Activated naive CD8-positive, alpha-beta T cell treated with anti-CD3 and anti-CD28 coated beads, Interleukin-2, amount 10 ng/mL, durations not matched to agents 7 days and 5 days (primary cell): ENCODE measurements at regions of chr6 and their contacts with region 1.

Region 1: GRCh38 chr6:33299237-33299944 is 649 bp upstream of the RGL2 start:
- DNase-seq: peak; percentile 94
- ATAC-seq: peak; percentile 85
- H3K4me3 Mint-ChIP-seq: peak overlapping the region; percentile 99
- H3K27ac Mint-ChIP-seq: peak overlapping the region; percentile 99
- H3K4me1 Mint-ChIP-seq: peaks cover 20% of the 10 kb centered on the region
- H3K27me3 Mint-ChIP-seq: no peaks in the 10 kb centered on the region

Region 2: DNA sequence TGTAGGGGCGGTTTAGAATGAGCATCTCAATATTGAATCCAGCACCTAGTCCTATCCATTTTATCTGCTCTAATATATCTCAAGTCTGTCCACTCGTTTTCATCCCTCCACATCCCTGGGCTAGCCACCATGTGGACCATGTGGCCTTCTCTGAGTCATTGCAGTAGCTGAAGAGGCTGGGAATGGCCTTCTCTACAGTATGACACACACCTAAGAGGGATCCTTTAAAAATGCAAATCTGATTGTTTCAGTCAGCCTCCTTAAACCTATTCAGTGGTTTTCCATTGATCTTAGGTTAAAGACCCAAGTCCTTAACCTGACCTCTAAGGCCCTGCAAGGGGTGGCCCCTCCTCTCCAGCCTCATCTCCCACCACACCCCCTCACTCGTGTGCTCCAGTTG is 81.7 kb before region 1 on chr6:
- POLR2A ChIA-PET with region 1: no interaction called
- DNase-seq: no peak
- ATAC-seq: no peak
- H3K4me3 Mint-ChIP-seq: no peak overlapping the region
- H3K27ac Mint-ChIP-seq: no peak overlapping the region
- H3K4me1 Mint-ChIP-seq: peaks cover 26% of the 10 kb centered on the region
- H3K27me3 Mint-ChIP-seq: peaks cover 28% of the 10 kb centered on the region

Region 3: GRCh38 chr6:33276864-33277662 is 22.3 kb before region 1 on chr6 and contains the start of gene B3GALT4:
- POLR2A ChIA-PET with region 1: interaction called, 69 read pairs
- DNase-seq: peak; percentile 86
- ATAC-seq: peak; percentile 76
- H3K4me3 Mint-ChIP-seq: peak within 1 kb of the TSS; percentile 97
- H3K27ac Mint-ChIP-seq: peak within 1 kb of the TSS; percentile 98
- H3K4me1 Mint-ChIP-seq: peaks cover 46% of the 10 kb centered on the region
- H3K27me3 Mint-ChIP-seq: no peaks in the 10 kb centered on the region
- total RNA-seq, gene B3GALT4: 32.0 to 35.4 TPM

Region 4: DNA sequence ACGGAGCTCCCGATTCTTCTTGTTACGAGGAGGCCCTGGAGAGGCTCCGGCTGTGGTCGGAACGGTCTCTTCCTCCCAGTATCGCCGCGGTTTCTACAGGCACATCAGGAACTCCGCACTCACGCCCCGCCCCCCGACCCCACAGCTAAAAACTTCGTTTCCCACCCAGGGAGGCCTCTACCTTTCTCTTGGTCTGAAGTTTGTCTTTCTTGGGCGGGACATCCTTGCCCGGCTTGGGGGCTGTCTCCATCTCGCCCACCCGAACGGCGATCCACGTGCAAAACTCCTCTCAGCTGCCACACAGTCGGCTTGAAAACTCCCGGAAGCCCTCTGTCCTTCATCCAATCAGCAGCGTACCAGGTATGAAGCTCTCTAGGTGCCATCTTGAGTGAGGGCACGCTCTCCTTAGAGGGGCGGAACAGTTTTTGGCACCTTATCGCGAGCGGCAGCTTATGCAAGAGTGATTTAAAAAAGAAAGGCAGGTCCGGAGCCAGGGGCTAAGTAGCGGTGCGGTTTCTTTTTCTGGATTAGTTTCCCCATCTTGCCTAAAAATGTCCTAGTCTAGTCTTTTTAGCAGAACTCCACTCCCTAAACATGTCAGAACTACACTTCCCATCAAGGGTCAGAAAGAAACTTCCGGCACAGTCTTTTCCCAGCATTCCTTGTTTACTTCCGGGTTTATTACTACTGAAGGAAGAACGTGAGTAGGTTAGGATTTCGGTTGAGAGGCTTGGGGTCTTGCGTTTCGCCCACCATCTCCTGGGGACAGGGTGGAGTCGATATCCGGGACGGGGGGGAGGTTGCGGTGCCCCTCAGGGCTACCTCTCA is 10.3 kb before region 1 on chr6 and contains the starts of genes PFDN6 and WDR46:
- POLR2A ChIA-PET with region 1: interaction called, 40 read pairs
- DNase-seq: peak; percentile 74
- ATAC-seq: peak; percentile 97
- H3K4me3 Mint-ChIP-seq: peak within 1 kb of the TSS; percentile 96
- H3K27ac Mint-ChIP-seq: peak within 1 kb of the TSS; percentile 90
- H3K4me1 Mint-ChIP-seq: peaks cover 31% of the 10 kb centered on the region
- H3K27me3 Mint-ChIP-seq: no peaks in the 10 kb centered on the region
- total RNA-seq, gene PFDN6: 53.3 to 54.7 TPM
- total RNA-seq, gene WDR46: 50.0 to 58.0 TPM

Region 5: DNA sequence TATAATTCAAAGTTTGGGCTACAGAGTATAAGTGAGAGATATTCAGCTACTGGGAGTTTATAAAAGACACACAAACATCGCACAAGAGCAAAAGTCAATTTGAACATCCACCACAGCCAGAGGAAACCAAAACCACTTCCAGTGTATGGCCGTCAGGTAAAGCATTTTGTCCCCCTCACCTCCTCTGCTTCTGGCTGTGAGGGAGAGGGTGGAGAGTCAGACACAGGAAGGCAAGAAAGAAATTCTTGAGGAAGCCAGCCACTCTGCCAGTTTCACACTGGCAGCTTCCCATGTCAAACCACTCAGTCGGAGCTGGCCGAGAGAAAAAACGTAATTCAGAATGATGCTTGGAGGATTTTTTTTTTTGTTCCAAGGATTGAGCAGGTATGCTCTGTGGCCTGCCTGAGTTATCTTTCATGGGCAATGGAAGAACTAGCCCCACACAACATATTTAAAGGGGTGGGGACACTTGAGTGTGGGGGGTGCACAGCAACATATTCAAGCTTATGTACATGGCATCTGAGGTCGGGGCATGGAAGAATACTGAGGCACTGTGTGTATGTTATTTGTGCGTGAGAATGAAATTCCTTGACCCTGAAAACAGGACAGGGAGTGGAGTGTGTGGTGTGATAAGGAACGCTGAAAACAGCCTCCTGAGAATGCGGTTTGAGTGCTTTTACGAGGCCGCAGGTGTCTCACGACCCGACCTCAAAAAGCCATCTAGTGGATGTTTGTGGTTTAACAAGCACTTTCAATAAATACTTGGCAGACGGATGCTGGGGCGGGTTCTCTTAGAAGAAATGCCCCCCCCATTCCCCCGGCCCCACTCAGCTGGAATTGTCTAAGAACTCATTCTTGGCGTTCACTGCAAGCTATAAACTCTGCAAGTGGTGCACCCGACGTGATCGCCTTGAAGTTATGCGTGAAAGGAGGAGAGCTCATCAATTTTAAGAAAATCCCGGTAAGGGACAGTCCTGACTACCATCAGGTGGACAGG is 45.6 kb after region 1 on chr6:
- POLR2A ChIA-PET with region 1: interaction called, 29 read pairs
- DNase-seq: peak; percentile 61
- ATAC-seq: peak; percentile 68
- H3K4me3 Mint-ChIP-seq: peak overlapping the region; percentile 74
- H3K27ac Mint-ChIP-seq: peak overlapping the region; percentile 87
- H3K4me1 Mint-ChIP-seq: peaks cover 28% of the 10 kb centered on the region
- H3K27me3 Mint-ChIP-seq: no peaks in the 10 kb centered on the region

Region 6: DNA sequence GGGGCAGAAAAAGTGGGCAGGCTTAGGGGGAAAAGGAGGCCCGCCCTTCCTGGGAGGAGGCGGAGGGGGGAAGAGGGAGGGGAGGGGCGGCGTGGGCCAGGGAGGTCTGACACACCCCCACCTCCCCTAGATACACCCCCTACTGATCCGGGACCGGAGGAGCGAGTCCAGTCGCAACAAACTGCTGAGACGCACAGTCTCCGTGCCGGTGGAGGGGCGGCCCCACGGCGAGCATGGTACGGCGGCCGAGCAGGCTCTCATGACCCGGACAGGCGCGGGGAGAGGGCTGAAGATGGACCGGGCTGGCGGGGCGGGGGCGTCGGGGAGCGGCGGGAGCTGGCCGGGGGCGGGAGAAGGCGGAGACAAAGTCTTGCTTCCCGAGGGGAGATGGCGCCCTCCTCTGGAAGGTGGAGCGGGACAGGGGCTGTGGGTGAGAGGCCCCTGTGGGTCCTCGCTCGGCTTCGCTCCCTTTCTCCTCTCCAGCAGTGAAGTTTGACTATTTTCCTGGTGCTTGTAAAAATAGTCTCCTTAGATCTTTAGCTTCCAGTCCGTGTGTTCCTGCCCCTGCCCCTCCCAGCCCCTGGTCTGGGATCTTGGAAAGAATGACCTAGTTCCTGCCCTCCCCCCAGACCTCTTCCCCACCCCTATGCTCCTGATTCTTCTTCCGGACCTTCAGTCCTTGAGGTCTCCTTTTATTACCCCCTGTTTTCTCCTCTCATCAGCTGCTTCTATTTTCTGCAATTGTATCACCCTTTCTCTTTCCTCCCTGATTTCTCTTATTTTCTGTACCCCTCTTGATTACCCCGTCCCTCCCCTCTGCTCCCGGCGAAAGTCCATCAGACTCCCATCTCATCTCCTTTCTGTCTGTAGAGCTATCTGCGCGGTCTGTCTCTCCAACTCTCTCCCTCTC is 126.5 kb after region 1 on chr6:
- POLR2A ChIA-PET with region 1: interaction called, 11 read pairs
- DNase-seq: peak; percentile 84
- ATAC-seq: peak; percentile 68
- H3K4me3 Mint-ChIP-seq: peak overlapping the region; percentile 94
- H3K27ac Mint-ChIP-seq: peak overlapping the region; percentile 95
- H3K4me1 Mint-ChIP-seq: peaks cover 65% of the 10 kb centered on the region
- H3K27me3 Mint-ChIP-seq: peaks cover 3% of the 10 kb centered on the region

Region 7: GRCh38 chr6:33454009-33454946 is 154.9 kb after region 1 on chr6 and contains the start of gene ZBTB9:
- POLR2A ChIA-PET with region 1: no interaction called
- DNase-seq: peak; percentile 93
- ATAC-seq: peak; percentile 99
- H3K4me3 Mint-ChIP-seq: peak within 1 kb of the TSS; percentile 86
- H3K27ac Mint-ChIP-seq: peak within 1 kb of the TSS; percentile 75
- H3K4me1 Mint-ChIP-seq: peaks cover 21% of the 10 kb centered on the region
- H3K27me3 Mint-ChIP-seq: no peaks in the 10 kb centered on the region
- total RNA-seq, gene ZBTB9: 9.1 to 9.8 TPM